ENCODE measurements at regions of chr1 and their contacts with region 1.

Region 1: DNA sequence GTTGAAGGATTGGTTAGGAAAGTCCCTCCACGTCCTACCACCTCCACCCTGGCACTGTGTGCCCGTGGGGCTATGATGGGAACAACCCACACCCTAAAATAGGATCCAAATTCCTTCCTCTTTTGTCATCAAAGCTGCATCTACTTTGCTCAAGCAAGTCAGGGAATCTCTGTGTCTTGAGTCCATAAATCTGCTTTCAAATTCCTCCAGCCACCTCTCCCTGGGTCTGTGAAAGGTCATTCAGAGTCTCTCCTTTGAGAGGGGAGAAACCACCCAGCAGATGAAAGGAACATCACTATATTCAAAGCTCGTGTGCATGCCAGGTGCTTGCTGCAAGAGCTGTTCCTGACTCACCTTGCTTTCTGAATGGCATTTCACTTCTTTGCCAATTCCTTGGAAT is 243.6 kb downstream of the TM2D1 start:
- DNase-seq: no peak
- H3K4me3 ChIP-seq: no peak overlapping the region
- H3K27ac ChIP-seq: no peak overlapping the region
- H3K4me1 ChIP-seq: no peaks in the 10 kb centered on the region
- CTCF ChIP-seq: no peak

Region 2: DNA sequence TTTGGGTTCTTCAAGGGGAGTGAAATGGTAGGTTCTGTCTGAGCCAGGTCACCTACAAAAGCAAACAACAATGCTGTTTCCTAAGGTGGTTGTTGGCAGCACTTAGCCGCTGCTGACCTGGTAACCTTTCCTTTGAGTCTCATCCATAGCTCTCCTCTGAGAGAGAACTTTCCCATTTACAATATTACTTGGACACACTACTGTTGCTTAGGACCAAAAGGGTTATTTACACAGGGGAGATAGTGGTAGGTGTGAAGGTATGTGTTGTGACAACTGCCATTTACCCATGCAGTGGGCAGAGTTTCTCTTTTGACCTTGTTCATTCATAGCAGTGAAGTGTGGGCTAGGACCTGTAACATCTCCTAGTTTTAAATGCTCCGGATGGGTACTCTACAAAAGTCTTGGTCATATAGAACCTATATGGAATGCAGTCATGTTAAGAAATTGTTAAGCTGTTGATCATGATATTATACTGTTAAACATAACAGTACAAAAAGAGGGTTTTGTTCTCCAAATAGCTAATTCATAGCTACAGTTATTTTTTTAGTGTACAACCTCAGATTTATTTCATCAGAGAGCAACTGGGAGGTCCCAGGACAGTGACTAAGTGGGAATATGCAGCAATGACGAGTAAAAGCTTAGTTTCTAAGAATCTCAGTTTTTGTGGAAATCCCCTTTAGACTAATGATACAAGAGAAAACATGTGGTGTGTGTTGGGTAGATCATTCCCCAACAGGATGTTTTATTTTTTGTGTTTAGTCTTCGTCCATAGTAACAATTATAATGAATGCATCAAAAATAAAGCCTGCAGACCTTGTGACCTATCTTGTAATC is 179.3 kb before region 1 on chr1:
- CTCF ChIA-PET with region 1: no interaction called
- POLR2A ChIA-PET with region 1: interaction called, 14 read pairs
- intact Hi-C with region 1: no loop called
- DNase-seq: no peak
- H3K4me3 ChIP-seq: no peak overlapping the region
- H3K27ac ChIP-seq: no peak overlapping the region
- H3K4me1 ChIP-seq: no peaks in the 10 kb centered on the region
- CTCF ChIP-seq: no peak